ENCODE measurements at regions of chr2 and their contacts with region 1.

Region 1: DNA sequence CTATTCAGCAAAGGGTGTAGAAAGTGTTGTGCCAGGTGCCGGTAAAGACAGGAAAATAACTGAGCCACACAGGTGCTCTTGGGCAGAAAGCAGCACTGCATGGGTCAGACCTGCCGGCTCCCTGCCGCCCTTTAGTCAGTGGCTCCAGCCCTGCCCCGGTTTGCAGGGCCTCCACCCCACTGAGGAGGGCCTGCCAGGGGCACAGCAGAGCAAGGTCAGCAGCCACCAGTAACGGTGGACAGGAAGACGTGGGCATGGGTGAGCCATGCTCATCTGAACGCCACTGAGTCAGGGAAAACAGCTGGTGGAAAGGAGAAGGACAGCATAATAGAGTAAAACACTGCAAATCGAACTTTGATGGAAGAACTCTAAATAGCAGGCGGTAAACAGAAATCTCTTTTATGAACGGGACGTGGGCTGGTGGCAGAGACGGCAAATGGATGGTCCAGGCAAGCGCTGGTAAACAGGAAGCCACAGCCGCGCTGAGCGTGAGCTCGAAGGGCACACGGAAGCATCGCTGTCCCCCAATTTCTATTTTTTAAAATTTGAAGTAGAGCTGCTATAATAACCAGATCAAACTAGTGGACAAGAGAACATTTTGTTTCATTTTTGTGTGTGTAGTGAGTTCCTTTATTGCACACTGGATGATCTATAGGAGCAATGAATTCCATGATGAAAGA is 141.8 kb upstream of the ALKAL2 start:
- DNase-seq: peak in 7 of 9 experiments; percentile 33 to 77 (median 56)
- ATAC-seq: peak; percentile 76
- H3K4me3 ChIP-seq: peak overlapping the region; percentile 36 to 40
- H3K4me3 Mint-ChIP-seq: peak overlapping the region; percentile 79
- H3K27ac ChIP-seq: peak overlapping the region; percentile 39 to 79
- H3K27ac Mint-ChIP-seq: peak overlapping the region; percentile 97
- H3K4me1 ChIP-seq: peaks cover 26% of the 10 kb centered on the region
- H3K4me1 Mint-ChIP-seq: peaks cover 52% of the 10 kb centered on the region
- H3K27me3 ChIP-seq: no peaks in the 10 kb centered on the region
- H3K27me3 Mint-ChIP-seq: no peaks in the 10 kb centered on the region
- CTCF ChIP-seq: no peak

Region 2: DNA sequence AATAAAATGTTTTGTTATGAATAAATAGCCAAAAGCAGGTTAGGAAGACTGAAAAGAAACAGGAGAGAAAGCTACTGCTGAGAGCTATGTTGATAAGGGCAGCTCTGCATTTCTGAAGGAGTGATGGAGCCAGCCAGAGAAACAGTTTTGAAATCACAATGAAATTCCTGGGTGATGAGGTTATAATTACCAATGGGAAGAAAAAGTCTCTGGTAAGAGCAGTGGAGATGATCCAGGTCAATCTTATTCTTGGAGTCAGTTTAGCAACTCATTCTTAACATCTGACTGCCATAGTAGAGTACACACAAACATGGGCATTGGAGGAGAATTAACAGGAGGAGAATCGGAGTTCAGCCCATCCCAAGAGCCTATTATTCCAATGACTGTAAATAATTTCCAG is 144.2 kb before region 1 on chr2:
- CTCF ChIA-PET with region 1: no interaction called
- POLR2A ChIA-PET with region 1: no interaction called
- intact Hi-C with region 1: no loop called
- DNase-seq: no peak
- ATAC-seq: no peak
- H3K4me3 ChIP-seq: no peak overlapping the region
- H3K4me3 Mint-ChIP-seq: peak overlapping the region; percentile 7
- H3K27ac ChIP-seq: no peak overlapping the region
- H3K27ac Mint-ChIP-seq: no peak overlapping the region
- H3K4me1 ChIP-seq: peaks cover 14% of the 10 kb centered on the region
- H3K4me1 Mint-ChIP-seq: peaks cover 10% of the 10 kb centered on the region
- H3K27me3 ChIP-seq: peaks cover 10 to 15% of the 10 kb centered on the region in 2 experiments
- H3K27me3 Mint-ChIP-seq: peaks cover 12% of the 10 kb centered on the region
- CTCF ChIP-seq: no peak

Region 3: DNA sequence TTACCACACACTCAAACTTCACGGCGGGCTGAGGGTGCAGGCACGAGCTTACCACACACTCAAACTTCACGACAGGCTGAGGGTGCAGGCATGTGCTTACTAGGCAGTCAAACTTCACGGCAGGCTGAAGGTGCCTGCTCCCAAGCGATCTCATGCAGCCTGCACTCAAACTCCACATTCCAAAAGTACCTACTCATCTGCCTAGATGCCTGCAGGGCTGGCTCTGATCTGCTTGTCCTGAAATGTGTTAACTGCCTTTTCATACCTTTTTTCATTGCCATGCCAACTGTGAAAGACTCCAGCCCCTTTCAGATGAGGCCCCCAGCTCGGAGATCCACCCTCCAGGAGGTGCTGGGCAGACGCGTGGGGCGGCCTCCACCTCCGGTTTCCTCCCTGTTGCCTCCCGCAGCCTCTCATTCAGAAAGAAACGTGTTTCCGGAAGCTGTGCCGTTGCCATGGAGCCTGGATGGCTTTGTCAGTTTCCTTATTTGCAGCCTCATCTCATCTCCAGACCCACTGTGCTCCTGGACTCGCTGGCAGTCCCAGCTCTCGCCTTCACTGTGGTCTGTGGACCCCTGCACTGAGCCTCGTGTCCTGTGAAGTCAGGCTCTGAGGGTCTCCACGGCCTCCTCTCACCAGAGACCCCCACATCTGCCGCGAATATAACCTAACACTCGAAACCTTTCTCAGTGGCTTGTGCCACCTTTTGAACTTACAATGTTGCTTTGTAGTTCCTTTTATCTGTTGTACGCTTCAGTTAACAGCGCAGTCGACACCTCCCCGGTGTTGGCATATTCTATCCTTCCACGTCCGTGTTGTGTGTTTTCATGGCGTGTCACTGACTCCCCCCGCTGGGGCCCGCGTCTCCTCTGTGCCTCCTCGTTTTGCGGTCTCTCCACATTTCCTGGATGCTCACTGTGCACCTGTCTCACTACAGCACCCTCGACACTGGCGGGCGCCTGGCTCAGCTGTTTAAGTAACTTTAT is 35.7 kb before region 1 on chr2:
- CTCF ChIA-PET with region 1: interaction called, 3 read pairs
- POLR2A ChIA-PET with region 1: interaction called, 11 read pairs
- intact Hi-C with region 1: loop called in 1 of 2 experiments (anchors 5 kb)
- DNase-seq: peak; percentile 31 to 85 (median 71)
- ATAC-seq: peak; percentile 82
- H3K4me3 ChIP-seq: peak overlapping the region; percentile 33 to 36
- H3K4me3 Mint-ChIP-seq: peak overlapping the region; percentile 88
- H3K27ac ChIP-seq: peak overlapping the region; percentile 28 to 69
- H3K27ac Mint-ChIP-seq: peak overlapping the region; percentile 96
- H3K4me1 ChIP-seq: peaks cover 24% of the 10 kb centered on the region
- H3K4me1 Mint-ChIP-seq: peaks cover 23% of the 10 kb centered on the region
- H3K27me3 ChIP-seq: no peaks in the 10 kb centered on the region
- H3K27me3 Mint-ChIP-seq: no peaks in the 10 kb centered on the region
- CTCF ChIP-seq: no peak

Region 4: DNA sequence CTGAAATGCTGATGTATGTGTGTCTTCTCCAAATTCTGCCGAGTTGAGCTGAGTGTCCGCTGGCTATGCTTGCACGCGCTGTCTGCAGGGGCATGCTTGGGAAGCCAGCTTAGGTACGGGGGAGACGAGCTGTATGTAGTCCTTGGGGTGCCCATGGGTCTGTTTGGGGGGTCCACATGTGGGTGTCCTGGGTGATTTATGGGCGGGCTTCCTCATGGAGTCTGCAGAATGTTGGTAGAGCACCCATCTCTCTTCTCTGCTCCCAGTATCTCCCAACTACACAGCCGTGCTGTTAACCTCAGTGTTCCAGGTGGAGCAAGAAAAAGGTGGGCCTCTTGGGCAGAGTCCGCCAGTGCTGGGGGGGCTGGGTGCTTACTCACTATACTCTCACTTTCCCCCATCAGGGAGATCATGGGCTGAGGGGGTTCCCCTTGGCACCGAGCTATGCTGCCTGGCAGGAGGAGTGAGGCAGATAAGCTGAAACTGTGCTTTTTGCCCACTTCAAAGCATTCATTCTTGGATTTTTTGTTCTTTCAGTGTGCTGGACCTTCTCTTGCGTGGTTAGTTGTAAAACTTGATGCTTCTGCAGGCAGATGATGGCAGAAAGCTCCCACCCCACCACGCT is 13.6 kb before region 1 on chr2:
- CTCF ChIA-PET with region 1: interaction called, 5 read pairs
- POLR2A ChIA-PET with region 1: interaction called, 10 read pairs
- intact Hi-C with region 1: no loop called
- DNase-seq: peak in 1 of 9 experiments; percentile 44
- ATAC-seq: no peak
- H3K4me3 ChIP-seq: no peak overlapping the region
- H3K4me3 Mint-ChIP-seq: no peak overlapping the region
- H3K27ac ChIP-seq: no peak overlapping the region
- H3K27ac Mint-ChIP-seq: no peak overlapping the region
- H3K4me1 ChIP-seq: no peaks in the 10 kb centered on the region
- H3K4me1 Mint-ChIP-seq: peaks cover 11% of the 10 kb centered on the region
- H3K27me3 ChIP-seq: no peaks in the 10 kb centered on the region
- H3K27me3 Mint-ChIP-seq: no peaks in the 10 kb centered on the region
- CTCF ChIP-seq: no peak

Region 5: DNA sequence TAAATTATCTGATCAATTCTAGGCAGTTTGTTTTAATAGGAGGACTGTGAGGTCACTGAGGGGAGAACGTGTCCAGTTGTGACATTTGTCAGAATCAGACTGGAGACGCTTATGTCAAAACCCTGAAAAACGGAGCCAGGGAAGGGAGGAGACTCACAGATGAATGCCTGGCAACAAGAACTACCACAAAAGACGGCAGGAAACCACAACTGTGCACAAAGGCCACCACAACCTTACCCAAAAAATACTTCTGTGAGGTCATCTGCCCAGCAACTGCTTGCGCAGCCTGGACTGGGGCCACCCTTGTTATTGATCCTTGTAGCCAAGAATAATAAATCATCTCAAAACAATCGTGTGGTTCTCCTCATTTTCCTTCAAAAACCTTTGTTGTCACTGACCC is 31.1 kb after region 1 on chr2:
- CTCF ChIA-PET with region 1: no interaction called
- POLR2A ChIA-PET with region 1: interaction called, 6 read pairs
- intact Hi-C with region 1: loop called in 1 of 2 experiments (anchors 2 kb)
- DNase-seq: peak; percentile 29 to 89 (median 64)
- ATAC-seq: peak; percentile 78
- H3K4me3 ChIP-seq: peak overlapping the region in 1 of 2 experiments; percentile 19
- H3K4me3 Mint-ChIP-seq: peak overlapping the region; percentile 75
- H3K27ac ChIP-seq: no peak overlapping the region
- H3K27ac Mint-ChIP-seq: peak overlapping the region; percentile 28
- H3K4me1 ChIP-seq: peaks cover 22% of the 10 kb centered on the region
- H3K4me1 Mint-ChIP-seq: peaks cover 49% of the 10 kb centered on the region
- H3K27me3 ChIP-seq: peaks cover 3 to 4% of the 10 kb centered on the region in 2 experiments
- H3K27me3 Mint-ChIP-seq: peaks cover 31% of the 10 kb centered on the region
- CTCF ChIP-seq: no peak

Measured in CD8-positive, alpha-beta T cell (primary cell).